ENCODE measurements at regions of chr3 and their contacts with region 1.

Region 1: GRCh38 chr3:73100741-73101559 is 39.5 kb downstream of the EBLN2 start:
- DNase-seq: peak; percentile 90
- H3K4me3 Mint-ChIP-seq: no peak overlapping the region
- H3K27ac Mint-ChIP-seq: no peak overlapping the region
- H3K4me1 Mint-ChIP-seq: no peaks in the 10 kb centered on the region
- H3K27me3 Mint-ChIP-seq: no peaks in the 10 kb centered on the region

Region 2: GRCh38 chr3:73259856-73260255 is 158.9 kb after region 1 on chr3:
- CTCF ChIA-PET with region 1: no interaction called
- intact Hi-C with region 1: loop called (anchors 10 kb)
- DNase-seq: no peak
- H3K4me3 Mint-ChIP-seq: no peak overlapping the region
- H3K27ac Mint-ChIP-seq: no peak overlapping the region
- H3K4me1 Mint-ChIP-seq: no peaks in the 10 kb centered on the region
- H3K27me3 Mint-ChIP-seq: peaks cover 22% of the 10 kb centered on the region

Region 3: GRCh38 chr3:73432023-73432705 is 331.2 kb after region 1 on chr3:
- CTCF ChIA-PET with region 1: interaction called, 8 read pairs
- intact Hi-C with region 1: loop called (anchors 1 kb)
- DNase-seq: peak; percentile 16
- H3K4me3 Mint-ChIP-seq: no peak overlapping the region
- H3K27ac Mint-ChIP-seq: no peak overlapping the region
- H3K4me1 Mint-ChIP-seq: no peaks in the 10 kb centered on the region
- H3K27me3 Mint-ChIP-seq: peaks cover 11% of the 10 kb centered on the region

Measured in activated naive CD4-positive, alpha-beta T cell treated with anti-CD3 and anti-CD28 coated beads for 36 hours (primary cell).